Dorsolateral prefrontal cortex (tissue), 120 donors: ENCODE measurements at regions of chr3 and their contacts with region 1.

Region 1: DNA sequence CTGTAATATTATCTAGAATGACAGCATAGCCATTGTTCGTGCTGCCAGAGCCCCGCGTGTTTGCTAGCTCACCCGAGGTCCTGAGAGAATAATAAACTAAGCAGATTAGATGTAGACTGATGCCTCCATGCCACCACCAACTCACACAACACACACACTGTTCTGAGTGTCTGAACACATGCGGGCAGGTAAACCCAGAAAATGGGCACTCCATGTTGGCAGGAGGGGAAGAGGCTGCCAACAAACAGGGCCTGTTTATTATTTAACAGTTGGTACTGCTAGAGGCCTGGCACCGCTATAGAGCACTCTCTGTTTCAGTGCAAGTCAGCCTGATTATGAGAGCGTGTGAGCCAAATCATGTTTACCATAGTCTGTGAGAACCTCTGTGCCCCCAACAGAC is 299.0 kb downstream of the ZBTB20 start:
- DNase-seq: peak; percentile 42 to 88 (median 71)
- H3K4me3 ChIP-seq: peak overlapping the region in 18 of 59 donors; percentile 1 to 37 (median 16)
- H3K27ac ChIP-seq: peak overlapping the region; percentile 73 to 100 (median 96)
- H3K27me3 ChIP-seq: no peaks in the 10 kb centered on the region
- CTCF ChIP-seq: peak in 2 of 56 donors; percentile 11 to 12

Region 2: DNA sequence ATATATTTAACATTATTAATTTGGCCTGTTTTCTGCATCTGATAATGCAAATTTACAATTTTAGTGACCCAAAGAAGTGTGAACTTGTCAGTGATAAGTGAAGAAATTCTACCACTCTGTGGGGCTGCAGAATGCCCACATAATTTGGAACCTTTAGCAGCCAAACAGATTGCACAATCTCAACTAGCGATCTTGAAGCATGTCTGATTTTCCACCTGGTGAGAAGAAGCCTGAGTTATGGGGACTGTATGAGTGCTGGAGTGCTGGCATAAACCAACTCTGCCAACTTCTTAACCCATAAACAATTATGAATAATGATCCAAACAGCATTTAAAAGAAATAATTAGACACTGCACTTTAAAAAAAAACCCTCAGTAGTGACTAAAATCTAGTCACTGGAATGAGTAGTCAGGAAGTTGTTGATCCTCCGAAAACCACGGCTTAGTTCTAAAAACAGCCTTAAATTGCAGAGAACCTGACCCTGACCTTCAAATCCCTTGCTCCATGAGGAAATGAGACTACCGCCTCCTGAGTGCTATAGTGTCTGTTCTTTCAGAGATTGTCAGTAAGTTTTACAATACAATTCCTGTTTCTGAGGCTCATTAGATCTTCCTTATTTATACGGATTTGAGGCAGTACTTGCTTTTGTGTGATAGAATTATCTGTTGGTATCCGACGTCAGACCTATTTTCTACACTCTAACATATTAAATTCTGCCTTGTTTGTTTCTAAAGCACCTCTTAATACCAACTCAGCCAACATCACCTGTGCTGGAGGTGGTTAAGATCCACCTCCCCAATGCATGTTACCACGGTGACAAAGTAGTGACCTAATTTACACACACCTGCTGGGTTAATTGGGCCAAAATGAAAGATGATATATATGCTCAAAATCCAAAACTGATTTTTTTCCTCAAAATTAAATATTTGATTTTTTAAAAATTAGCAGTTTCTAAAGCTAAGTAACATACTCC is 31.3 kb after region 1 on chr3:
- intact Hi-C with region 1: loop called in 1 of 2 experiments (anchors 2 kb)
- DNase-seq: peak in 1 of 10 donors; percentile 38
- H3K4me3 ChIP-seq: peak overlapping the region in 2 of 59 donors; percentile 7 to 16
- H3K27ac ChIP-seq: peak overlapping the region in 58 of 59 donors; percentile 5 to 95 (median 86)
- H3K27me3 ChIP-seq: no peaks in the 10 kb centered on the region
- CTCF ChIP-seq: no peak

Region 3: GRCh38 chr3:114902691-114903101 is 54.6 kb after region 1 on chr3:
- intact Hi-C with region 1: loop called in 1 of 2 experiments (anchors 5 kb)
- DNase-seq: no peak
- H3K4me3 ChIP-seq: peak overlapping the region in 4 of 59 donors; percentile 16 to 34 (median 16)
- H3K27ac ChIP-seq: peak overlapping the region in 57 of 59 donors; percentile 10 to 85 (median 72)
- H3K27me3 ChIP-seq: no peaks in the 10 kb centered on the region
- CTCF ChIP-seq: no peak

Region 4: GRCh38 chr3:115081444-115081843 is 233.4 kb after region 1 on chr3:
- intact Hi-C with region 1: loop called in 1 of 2 experiments (anchors 5 kb)
- DNase-seq: no peak
- H3K4me3 ChIP-seq: peak overlapping the region in 34 of 59 donors; percentile 14 to 63 (median 47)
- H3K27ac ChIP-seq: peak overlapping the region in 55 of 59 donors; percentile 5 to 91 (median 76)
- H3K27me3 ChIP-seq: no peaks in the 10 kb centered on the region
- CTCF ChIP-seq: peak in 21 of 56 donors; percentile 5 to 60 (median 27)